ENCODE measurements at regions of chr1 and their contacts with region 1.

Region 1: DNA sequence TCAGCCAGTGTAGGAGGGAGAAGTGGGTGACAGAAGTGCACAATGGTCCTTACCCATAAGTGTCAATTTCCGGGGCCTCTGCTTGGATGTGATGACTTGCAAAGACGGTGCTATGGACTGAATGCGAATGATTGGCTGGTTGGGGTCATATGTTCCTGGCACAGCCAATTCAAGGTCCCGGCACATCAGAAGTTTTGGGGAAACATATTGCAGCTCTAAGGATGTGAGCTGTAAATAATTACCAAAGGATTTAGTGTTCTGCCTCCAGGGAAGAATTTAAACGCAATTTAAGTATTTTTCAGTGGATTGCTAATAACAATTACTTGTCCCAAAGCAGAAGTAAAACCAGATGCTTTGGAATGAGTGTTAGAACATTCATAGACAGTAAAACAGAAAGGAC is 26.9 kb upstream of the EXOSC10 start:
- DNase-seq: no peak
- ATAC-seq: no peak
- H3K4me3 ChIP-seq: no peak overlapping the region
- H3K27ac ChIP-seq: no peak overlapping the region
- H3K4me1 ChIP-seq: no peaks in the 10 kb centered on the region
- H3K27me3 ChIP-seq: no peaks in the 10 kb centered on the region
- CTCF ChIP-seq: no peak

Region 2: GRCh38 chr1:10851024-10852013 is 275.2 kb before region 1 on chr1:
- intact Hi-C with region 1: no loop called
- DNase-seq: peak in 1 of 2 donors; percentile 80
- ATAC-seq: peak; percentile 81 to 88 (median 84)
- H3K4me3 ChIP-seq: no peak overlapping the region
- H3K27ac ChIP-seq: peak overlapping the region; percentile 86
- H3K4me1 ChIP-seq: peaks cover 20% of the 10 kb centered on the region
- H3K27me3 ChIP-seq: no peaks in the 10 kb centered on the region
- CTCF ChIP-seq: no peak

Region 3: DNA sequence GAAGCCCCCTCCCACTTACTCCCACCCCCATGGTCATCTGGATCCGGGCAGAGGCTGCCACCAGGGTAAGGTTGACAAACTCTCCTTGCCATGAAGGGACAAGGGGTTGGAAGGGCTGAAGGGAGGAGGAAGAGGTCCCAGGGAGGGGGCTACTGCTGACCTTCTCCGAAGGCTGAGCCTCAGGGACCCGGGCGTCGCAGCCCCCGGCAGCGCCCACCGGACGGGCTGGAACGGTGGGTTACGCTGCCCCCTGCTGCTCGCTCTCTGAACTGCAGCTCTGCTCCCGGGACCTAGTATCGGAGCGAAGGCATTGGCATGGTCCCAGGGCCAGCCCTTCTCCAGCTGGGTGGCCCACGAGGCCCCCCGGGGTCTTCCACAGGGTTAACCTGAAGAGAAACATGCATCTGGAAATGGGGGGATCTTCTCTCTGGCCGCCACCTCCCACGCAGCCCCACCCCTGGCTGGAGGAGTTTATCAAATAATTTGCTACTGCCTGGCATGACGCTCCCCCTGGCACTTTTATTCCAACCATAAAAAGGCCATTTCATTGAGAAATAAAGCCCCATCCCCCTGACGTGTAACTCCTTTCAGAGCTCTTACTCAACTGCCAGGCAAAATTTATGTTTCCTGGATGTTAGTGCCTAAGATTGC is 184.6 kb before region 1 on chr1:
- intact Hi-C with region 1: no loop called
- DNase-seq: peak; percentile 65 to 82
- ATAC-seq: peak in 3 of 4 donors; percentile 56 to 60 (median 57)
- H3K4me3 ChIP-seq: peak overlapping the region; percentile 30
- H3K27ac ChIP-seq: no peak overlapping the region
- H3K4me1 ChIP-seq: peaks cover 16% of the 10 kb centered on the region
- H3K27me3 ChIP-seq: no peaks in the 10 kb centered on the region
- CTCF ChIP-seq: peak; percentile 88

Region 4: DNA sequence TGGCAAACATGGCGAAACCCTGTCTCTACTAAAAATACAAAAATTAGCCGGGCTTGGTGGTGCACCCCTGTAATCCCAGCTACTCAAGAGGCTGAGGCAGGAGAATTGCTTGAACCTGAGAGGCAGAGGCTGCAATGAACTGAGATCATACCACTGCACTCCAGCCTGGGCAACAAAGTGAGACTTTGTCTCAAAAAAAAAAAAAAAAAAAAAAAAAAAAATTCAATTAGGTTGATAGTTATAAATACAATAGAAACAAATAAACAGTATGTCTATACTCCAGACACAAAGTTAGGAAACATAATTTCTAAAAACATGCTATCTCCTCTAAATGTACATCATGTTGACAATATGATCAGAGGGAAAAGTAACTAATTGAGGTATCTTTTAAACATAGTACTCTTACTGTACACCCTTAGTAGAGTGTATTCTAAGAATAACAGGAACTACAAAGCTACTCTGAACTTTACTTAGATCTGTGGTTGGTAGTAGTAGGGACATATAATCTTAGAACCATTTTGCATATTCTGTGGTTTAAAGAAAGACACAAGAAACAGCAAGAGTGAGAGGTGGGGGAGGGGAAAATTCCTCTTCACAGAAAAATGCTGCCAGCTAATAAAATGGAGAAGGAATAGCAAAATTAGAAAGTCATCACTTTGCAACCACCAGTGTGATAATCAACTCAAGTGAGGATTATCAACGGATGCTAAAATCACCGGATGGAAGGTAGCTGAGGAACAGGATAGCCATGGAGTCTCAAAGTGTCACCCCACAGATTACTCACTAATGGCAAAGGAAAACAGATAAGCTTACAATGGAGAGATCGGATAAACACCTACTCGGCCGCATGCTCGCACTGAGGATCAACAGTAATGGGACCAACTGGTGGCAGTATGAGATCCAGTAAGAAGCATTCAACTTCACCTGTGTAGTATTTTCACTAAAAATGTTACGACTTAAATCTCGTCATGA is 100.8 kb after region 1 on chr1:
- intact Hi-C with region 1: loop called in 1 of 2 experiments (anchors 10 kb)
- DNase-seq: no peak
- ATAC-seq: no peak
- H3K4me3 ChIP-seq: no peak overlapping the region
- H3K27ac ChIP-seq: no peak overlapping the region
- H3K4me1 ChIP-seq: no peaks in the 10 kb centered on the region
- H3K27me3 ChIP-seq: no peaks in the 10 kb centered on the region
- CTCF ChIP-seq: no peak

Measured in psoas muscle (tissue), 8 donors.